Activated B cell treated with CpG ODN at 0.5 μM for 24 hours (primary cell): ENCODE measurements at regions of chr2 and their contacts with region 1.

Region 1: GRCh38 chr2:181354626-181355025 is 102.6 kb upstream of the ITGA4 start:
- DNase-seq: no peak
- ATAC-seq: no peak
- H3K4me3 Mint-ChIP-seq: no peak overlapping the region
- H3K27ac Mint-ChIP-seq: no peak overlapping the region
- H3K4me1 Mint-ChIP-seq: peaks cover 29% of the 10 kb centered on the region
- H3K27me3 Mint-ChIP-seq: no peaks in the 10 kb centered on the region
- CTCF ChIP-seq: no peak

Region 2: DNA sequence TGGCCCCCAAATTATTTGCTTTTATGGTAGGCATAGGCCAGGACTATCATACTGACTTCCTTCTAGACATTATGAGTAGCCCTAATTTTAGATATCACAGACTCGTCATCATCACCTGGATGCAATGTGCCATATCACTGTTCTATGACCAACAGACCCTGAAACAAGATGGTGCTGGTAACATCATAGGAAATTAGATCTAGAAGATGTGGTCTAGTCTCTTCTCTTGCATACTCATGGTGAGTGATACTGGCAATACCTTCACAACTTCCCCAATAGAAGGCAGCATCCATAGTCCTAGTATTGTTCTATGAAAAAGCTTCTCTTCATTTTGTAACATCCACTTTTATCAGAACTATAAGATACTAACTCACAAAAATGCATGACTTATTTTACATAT is 13.7 kb before region 1 on chr2:
- CTCF ChIA-PET with region 1: no interaction called
- POLR2A ChIA-PET with region 1: interaction called, 3 read pairs
- intact Hi-C with region 1: loop called (anchors 2 kb)
- DNase-seq: no peak
- ATAC-seq: no peak
- H3K4me3 Mint-ChIP-seq: no peak overlapping the region
- H3K27ac Mint-ChIP-seq: no peak overlapping the region
- H3K4me1 Mint-ChIP-seq: peaks cover 14% of the 10 kb centered on the region
- H3K27me3 Mint-ChIP-seq: no peaks in the 10 kb centered on the region
- CTCF ChIP-seq: no peak